GM18951 (cell line): ENCODE measurements at regions of chr20 and their contacts with region 1.

Region 1: GRCh38 chr20:3068986-3069900 is 2.2 kb upstream of the OXT start:
- POLR2A ChIP-seq: no peak

Region 2: GRCh38 chr20:2421247-2421646 is 648.0 kb before region 1 on chr20:
- in situ Hi-C with region 1: no loop called
- POLR2A ChIP-seq: no peak

Region 3: GRCh38 chr20:3312940-3313682 is 243.9 kb after region 1 on chr20:
- in situ Hi-C with region 1: loop called (anchors 25 kb)
- POLR2A ChIP-seq: no peak